ENCODE measurements at regions of chr4 and their contacts with region 1.

Region 1: DNA sequence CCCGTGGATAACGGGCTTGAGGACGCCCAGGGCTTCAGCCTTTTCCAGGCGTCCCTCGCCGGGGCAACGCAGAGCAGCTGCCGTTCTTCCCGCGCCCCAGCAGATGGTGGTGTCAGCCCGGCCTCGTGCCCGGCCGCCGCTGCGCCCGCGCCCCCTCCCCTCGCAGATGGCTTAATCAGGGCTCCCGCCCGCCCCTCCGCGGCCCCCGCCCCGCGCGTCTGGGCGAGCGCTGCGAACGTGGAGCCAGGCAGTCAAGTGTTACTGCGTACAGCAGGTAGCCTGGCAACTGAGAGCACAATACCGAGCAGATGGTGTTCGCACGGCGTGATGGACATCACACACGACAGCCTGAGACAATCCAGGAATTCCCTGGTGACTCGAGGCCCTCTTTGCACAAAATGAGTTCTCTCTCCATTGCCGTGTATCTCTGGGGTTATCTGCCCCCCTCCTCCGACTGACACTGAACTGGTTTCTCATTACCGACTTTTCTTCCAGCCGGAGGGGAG is 69.3 kb downstream of the MGST2 start:
- DNase-seq: peak; percentile 75
- ATAC-seq: peak; percentile 96
- H3K4me3 ChIP-seq: peak overlapping the region; percentile 52
- H3K27ac ChIP-seq: peak overlapping the region; percentile 15
- H3K4me1 ChIP-seq: peaks cover 6% of the 10 kb centered on the region
- H3K27me3 ChIP-seq: no peaks in the 10 kb centered on the region
- CTCF ChIP-seq: peak; percentile 77
- POLR2A ChIP-seq: no peak
- RAD21 ChIP-seq: peak; percentile 85

Region 2: GRCh38 chr4:139711461-139711860 is 23.5 kb before region 1 on chr4:
- CTCF ChIA-PET with region 1: no interaction called
- POLR2A ChIA-PET with region 1: no interaction called
- dilution Hi-C with region 1: no loop called
- in situ Hi-C with region 1: no loop called
- intact Hi-C with region 1: loop called (anchors 1 kb)
- DNase-seq: peak; percentile 54
- ATAC-seq: peak; percentile 21; the same call in 1 of the 2 replicates
- H3K4me3 ChIP-seq: no peak overlapping the region
- H3K27ac ChIP-seq: no peak overlapping the region
- H3K4me1 ChIP-seq: peaks cover 6% of the 10 kb centered on the region; the same call in 1 of the 2 replicates
- H3K27me3 ChIP-seq: no peaks in the 10 kb centered on the region
- CTCF ChIP-seq: no peak
- POLR2A ChIP-seq: no peak
- RAD21 ChIP-seq: no peak

Region 3: DNA sequence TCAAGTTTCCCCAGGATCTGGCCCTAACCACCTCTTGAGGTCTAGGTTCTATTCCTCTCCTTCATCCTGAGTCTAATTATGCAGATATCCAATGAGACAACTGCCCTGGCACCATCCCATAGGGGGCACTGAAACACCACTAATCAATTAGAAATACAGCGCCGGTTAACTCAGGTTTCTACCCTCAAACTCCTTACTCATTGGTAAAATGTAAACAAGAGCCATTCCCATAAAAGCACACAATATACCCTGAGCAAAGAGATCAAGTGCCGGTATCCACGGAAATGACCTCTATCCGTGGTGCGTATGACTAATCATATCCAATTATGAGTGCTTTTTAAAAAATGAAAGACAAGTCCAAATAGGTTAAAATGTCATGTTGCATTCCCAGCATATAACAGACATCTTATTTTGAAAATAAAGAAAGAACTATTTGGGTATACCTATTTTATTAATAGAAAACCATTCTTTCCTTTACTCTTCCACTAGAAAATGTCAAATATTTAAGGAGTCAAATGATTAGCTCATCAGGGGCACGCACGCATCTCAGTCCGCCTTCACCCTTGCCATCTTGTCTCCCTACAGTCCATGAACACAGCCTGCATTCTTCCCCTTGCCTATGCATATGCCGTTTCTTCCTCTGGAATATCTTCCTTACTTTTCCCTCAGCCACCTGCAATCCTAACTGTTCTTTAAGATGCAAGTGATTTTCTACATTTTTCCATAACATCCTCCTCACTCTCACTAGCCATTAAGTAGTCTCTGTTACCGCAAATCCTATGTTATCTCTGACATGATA is 278.0 kb after region 1 on chr4:
- CTCF ChIA-PET with region 1: interaction called, 3 read pairs
- POLR2A ChIA-PET with region 1: interaction called, 3 read pairs
- dilution Hi-C with region 1: no loop called
- in situ Hi-C with region 1: loop called (anchors 5 kb)
- intact Hi-C with region 1: loop called (anchors 5 kb)
- DNase-seq: peak; percentile 95
- ATAC-seq: peak; percentile 98
- H3K4me3 ChIP-seq: no peak overlapping the region
- H3K27ac ChIP-seq: no peak overlapping the region
- H3K4me1 ChIP-seq: peaks cover 4% of the 10 kb centered on the region
- H3K27me3 ChIP-seq: no peaks in the 10 kb centered on the region
- CTCF ChIP-seq: peak; percentile 91
- POLR2A ChIP-seq: no peak
- RAD21 ChIP-seq: peak; percentile 95

Region 4: DNA sequence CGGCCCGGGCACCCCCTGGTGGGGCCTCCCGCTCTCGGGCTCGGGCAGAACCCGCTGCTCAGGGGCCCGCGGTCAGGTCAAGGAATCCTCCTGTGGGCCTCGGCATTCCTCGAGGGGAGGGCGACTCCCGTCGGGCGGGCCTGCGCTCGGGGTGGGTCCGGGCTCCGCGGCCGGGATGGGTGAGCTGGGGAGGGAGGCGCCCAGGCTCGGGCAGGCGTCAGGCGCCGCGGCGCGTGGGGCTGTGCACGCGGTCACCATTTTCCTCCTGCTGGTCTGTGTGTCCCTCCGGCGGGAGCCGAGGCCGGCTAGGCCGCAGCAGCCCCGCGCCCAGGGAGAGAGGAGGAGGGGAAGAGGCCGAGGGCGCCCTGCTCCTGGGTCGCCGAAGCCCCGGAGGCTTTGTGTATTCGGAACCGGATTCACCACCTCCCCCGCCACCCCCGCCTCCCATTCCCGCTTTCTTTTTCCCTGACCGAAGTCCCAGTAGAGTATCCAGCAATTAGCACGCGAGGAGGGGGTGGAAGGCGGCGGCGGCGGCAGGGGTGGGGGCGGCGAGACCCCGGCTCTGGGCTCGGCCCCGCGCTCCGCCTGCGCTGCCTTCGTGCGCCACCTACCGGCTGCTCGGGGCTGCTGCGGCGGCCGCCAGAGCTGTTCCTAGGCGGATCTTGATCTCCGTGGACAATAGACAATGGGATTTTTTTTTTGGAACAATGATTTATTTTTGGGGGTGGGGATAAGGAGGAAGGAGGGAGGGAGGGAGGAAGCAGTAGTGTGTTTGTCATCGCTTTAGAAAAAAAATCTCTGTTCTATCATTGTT is 518.0 kb after region 1 on chr4:
- CTCF ChIA-PET with region 1: interaction called, 4 read pairs
- POLR2A ChIA-PET with region 1: no interaction called
- dilution Hi-C with region 1: no loop called
- in situ Hi-C with region 1: loop called (anchors 10 kb)
- intact Hi-C with region 1: loop called (anchors 1 kb)
- DNase-seq: peak; percentile 56
- ATAC-seq: peak; percentile 84
- H3K4me3 ChIP-seq: peak overlapping the region; percentile 42
- H3K27ac ChIP-seq: peak overlapping the region; percentile 78
- H3K4me1 ChIP-seq: peaks cover 25% of the 10 kb centered on the region
- H3K27me3 ChIP-seq: no peaks in the 10 kb centered on the region
- CTCF ChIP-seq: peak; percentile 89
- POLR2A ChIP-seq: no peak
- RAD21 ChIP-seq: peak; percentile 88

Region 5: GRCh38 chr4:140359562-140360427 is 624.9 kb after region 1 on chr4:
- CTCF ChIA-PET with region 1: no interaction called
- POLR2A ChIA-PET with region 1: no interaction called
- dilution Hi-C with region 1: no loop called
- in situ Hi-C with region 1: no loop called
- intact Hi-C with region 1: loop called (anchors 2 kb)
- DNase-seq: peak; percentile 81
- ATAC-seq: peak; percentile 89
- H3K4me3 ChIP-seq: no peak overlapping the region
- H3K27ac ChIP-seq: no peak overlapping the region
- H3K4me1 ChIP-seq: no peaks in the 10 kb centered on the region; the same call in 1 of the 2 replicates
- H3K27me3 ChIP-seq: peaks cover 12% of the 10 kb centered on the region
- CTCF ChIP-seq: peak; percentile 64
- POLR2A ChIP-seq: no peak
- RAD21 ChIP-seq: peak; percentile 61

Measured in IMR-90 (cell line).